Activated naive CD4-positive, alpha-beta T cell treated with anti-CD3 and anti-CD28 coated beads for 36 hours (primary cell): ENCODE measurements at regions of chr2 and their contacts with region 1.

Region 1: GRCh38 chr2:172588931-172589330 is 33.0 kb downstream of the PDK1 start:
- DNase-seq: no peak
- H3K4me3 Mint-ChIP-seq: no peak overlapping the region
- H3K27ac Mint-ChIP-seq: no peak overlapping the region
- H3K4me1 Mint-ChIP-seq: peaks cover 38% of the 10 kb centered on the region
- H3K27me3 Mint-ChIP-seq: no peaks in the 10 kb centered on the region

Region 2: DNA sequence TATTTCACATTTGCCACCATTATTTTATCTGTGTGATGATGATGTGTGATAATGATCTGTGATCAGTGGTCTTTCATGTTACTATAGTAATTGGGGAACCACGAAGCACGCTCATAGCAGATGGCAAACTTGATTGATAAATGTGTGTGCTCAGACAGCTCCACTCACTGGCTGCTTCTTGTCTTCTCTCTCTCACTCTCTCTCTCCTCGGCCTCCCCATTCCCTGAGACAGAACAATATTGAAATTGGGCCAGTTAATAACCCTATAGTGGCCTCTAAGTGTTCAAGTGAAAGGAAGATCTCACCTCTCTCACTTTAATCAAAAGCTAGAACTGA is 86.0 kb after region 1 on chr2:
- CTCF ChIA-PET with region 1: no interaction called
- intact Hi-C with region 1: loop called (anchors 1 kb)
- DNase-seq: no peak
- H3K4me3 Mint-ChIP-seq: no peak overlapping the region
- H3K27ac Mint-ChIP-seq: no peak overlapping the region
- H3K4me1 Mint-ChIP-seq: peaks cover 6% of the 10 kb centered on the region
- H3K27me3 Mint-ChIP-seq: peaks cover 1% of the 10 kb centered on the region

Region 3: DNA sequence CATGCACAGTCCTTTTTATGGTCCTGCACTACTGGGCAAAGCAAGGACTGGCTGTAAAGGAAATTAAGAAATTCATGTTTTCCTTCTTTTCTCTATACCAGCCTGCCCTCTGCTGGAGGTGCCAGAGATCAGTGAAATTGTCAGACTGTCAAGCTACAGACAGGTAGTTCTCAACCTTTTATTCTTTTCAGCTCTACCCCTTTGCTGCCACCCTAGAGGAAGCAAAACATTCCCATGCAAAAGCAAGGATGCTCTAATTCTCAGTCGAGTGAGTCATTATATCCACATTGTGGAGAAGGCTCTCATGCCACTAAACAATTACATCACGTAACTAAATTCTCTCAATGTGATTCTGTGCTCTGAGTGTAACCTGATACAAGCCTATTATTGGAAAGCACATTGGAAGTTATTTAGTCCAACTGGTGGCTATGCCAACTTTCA is 121.7 kb after region 1 on chr2:
- CTCF ChIA-PET with region 1: interaction called, 4 read pairs
- intact Hi-C with region 1: loop called (anchors 1 kb)
- DNase-seq: peak; percentile 69
- H3K4me3 Mint-ChIP-seq: no peak overlapping the region
- H3K27ac Mint-ChIP-seq: no peak overlapping the region
- H3K4me1 Mint-ChIP-seq: no peaks in the 10 kb centered on the region
- H3K27me3 Mint-ChIP-seq: no peaks in the 10 kb centered on the region